PC-9 (cell line): ENCODE measurements at regions of chr4 and their contacts with region 1.

Region 1: DNA sequence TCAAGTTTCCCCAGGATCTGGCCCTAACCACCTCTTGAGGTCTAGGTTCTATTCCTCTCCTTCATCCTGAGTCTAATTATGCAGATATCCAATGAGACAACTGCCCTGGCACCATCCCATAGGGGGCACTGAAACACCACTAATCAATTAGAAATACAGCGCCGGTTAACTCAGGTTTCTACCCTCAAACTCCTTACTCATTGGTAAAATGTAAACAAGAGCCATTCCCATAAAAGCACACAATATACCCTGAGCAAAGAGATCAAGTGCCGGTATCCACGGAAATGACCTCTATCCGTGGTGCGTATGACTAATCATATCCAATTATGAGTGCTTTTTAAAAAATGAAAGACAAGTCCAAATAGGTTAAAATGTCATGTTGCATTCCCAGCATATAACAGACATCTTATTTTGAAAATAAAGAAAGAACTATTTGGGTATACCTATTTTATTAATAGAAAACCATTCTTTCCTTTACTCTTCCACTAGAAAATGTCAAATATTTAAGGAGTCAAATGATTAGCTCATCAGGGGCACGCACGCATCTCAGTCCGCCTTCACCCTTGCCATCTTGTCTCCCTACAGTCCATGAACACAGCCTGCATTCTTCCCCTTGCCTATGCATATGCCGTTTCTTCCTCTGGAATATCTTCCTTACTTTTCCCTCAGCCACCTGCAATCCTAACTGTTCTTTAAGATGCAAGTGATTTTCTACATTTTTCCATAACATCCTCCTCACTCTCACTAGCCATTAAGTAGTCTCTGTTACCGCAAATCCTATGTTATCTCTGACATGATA is 141.1 kb downstream of the MAML3 start:
- DNase-seq: peak; percentile 74 to 91
- H3K4me3 ChIP-seq: no peak overlapping the region
- H3K27ac ChIP-seq: peak overlapping the region; percentile 74
- H3K4me1 ChIP-seq: peaks cover 30% of the 10 kb centered on the region
- H3K27me3 ChIP-seq: no peaks in the 10 kb centered on the region
- CTCF ChIP-seq: peak; percentile 79

Region 2: GRCh38 chr4:139656614-139657486 is 356.0 kb before region 1 on chr4:
- CTCF ChIA-PET with region 1: no interaction called
- POLR2A ChIA-PET with region 1: no interaction called
- intact Hi-C with region 1: loop called (anchors 5 kb)
- DNase-seq: peak in 1 of 2 experiments; percentile 53
- H3K4me3 ChIP-seq: no peak overlapping the region
- H3K27ac ChIP-seq: no peak overlapping the region
- H3K4me1 ChIP-seq: peaks cover 19% of the 10 kb centered on the region
- H3K27me3 ChIP-seq: no peaks in the 10 kb centered on the region
- CTCF ChIP-seq: peak; percentile 85

Region 3: GRCh38 chr4:140059159-140059558 is 46.3 kb after region 1 on chr4:
- CTCF ChIA-PET with region 1: no interaction called
- POLR2A ChIA-PET with region 1: no interaction called
- intact Hi-C with region 1: no loop called
- DNase-seq: peak in 1 of 2 experiments; percentile 42
- H3K4me3 ChIP-seq: no peak overlapping the region
- H3K27ac ChIP-seq: peak overlapping the region; percentile 66
- H3K4me1 ChIP-seq: peaks cover 32% of the 10 kb centered on the region
- H3K27me3 ChIP-seq: no peaks in the 10 kb centered on the region
- CTCF ChIP-seq: no peak

Region 4: GRCh38 chr4:140095694-140096482 is 83.0 kb after region 1 on chr4:
- CTCF ChIA-PET with region 1: no interaction called
- POLR2A ChIA-PET with region 1: no interaction called
- intact Hi-C with region 1: loop called (anchors 2 kb)
- DNase-seq: peak; percentile 46 to 68
- H3K4me3 ChIP-seq: no peak overlapping the region; the same call in 1 of the 2 replicates
- H3K27ac ChIP-seq: peak overlapping the region; percentile 99
- H3K4me1 ChIP-seq: peaks cover 98% of the 10 kb centered on the region
- H3K27me3 ChIP-seq: no peaks in the 10 kb centered on the region
- CTCF ChIP-seq: no peak

Region 5: GRCh38 chr4:140266991-140267426 is 254.1 kb after region 1 on chr4:
- CTCF ChIA-PET with region 1: interaction called, 3 read pairs
- POLR2A ChIA-PET with region 1: no interaction called
- intact Hi-C with region 1: loop called (anchors 1 kb)
- DNase-seq: peak; percentile 73 to 95
- H3K4me3 ChIP-seq: peak overlapping the region; percentile 55
- H3K27ac ChIP-seq: peak overlapping the region; percentile 99
- H3K4me1 ChIP-seq: peaks cover 30% of the 10 kb centered on the region
- H3K27me3 ChIP-seq: no peaks in the 10 kb centered on the region
- CTCF ChIP-seq: no peak

Region 6: GRCh38 chr4:140851032-140851636 is 838.2 kb after region 1 on chr4:
- CTCF ChIA-PET with region 1: no interaction called
- POLR2A ChIA-PET with region 1: no interaction called
- intact Hi-C with region 1: loop called (anchors 10 kb)
- DNase-seq: peak; percentile 41 to 43
- H3K4me3 ChIP-seq: no peak overlapping the region
- H3K27ac ChIP-seq: no peak overlapping the region
- H3K4me1 ChIP-seq: peaks cover 2% of the 10 kb centered on the region
- H3K27me3 ChIP-seq: no peaks in the 10 kb centered on the region
- CTCF ChIP-seq: peak; percentile 84

Region 7: DNA sequence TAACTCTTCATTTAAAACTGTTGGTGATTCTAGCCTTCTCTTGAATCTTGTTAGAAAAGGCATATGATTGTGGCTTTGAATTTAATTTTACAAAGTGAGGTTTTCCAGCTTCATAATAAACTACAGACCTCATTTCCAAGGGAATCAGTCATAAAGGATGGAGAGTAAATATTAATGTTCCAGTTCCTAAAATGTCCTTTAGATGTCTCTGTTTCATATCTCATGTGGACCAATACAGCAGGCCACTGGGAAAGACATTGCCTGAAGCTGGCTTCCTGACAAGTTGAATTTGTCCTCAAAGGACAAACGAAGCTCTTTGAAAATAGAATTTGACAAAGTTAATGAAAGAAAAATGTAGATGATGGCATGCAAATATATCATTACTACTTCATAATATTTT is 1333.3 kb after region 1 on chr4:
- CTCF ChIA-PET with region 1: no interaction called
- POLR2A ChIA-PET with region 1: no interaction called
- intact Hi-C with region 1: no loop called
- DNase-seq: no peak
- H3K4me3 ChIP-seq: no peak overlapping the region
- H3K27ac ChIP-seq: no peak overlapping the region
- H3K4me1 ChIP-seq: peaks cover 9% of the 10 kb centered on the region
- H3K27me3 ChIP-seq: no peaks in the 10 kb centered on the region
- CTCF ChIP-seq: peak; percentile 62